Posterior cingulate gyrus (tissue), 11 donors: ENCODE measurements at regions of chr9 and their contacts with region 1.

Region 1: GRCh38 chr9:136400038-136400834 is at the start of gene SNAPC4:
- DNase-seq: peak; percentile 66 to 98 (median 80)

Region 2: DNA sequence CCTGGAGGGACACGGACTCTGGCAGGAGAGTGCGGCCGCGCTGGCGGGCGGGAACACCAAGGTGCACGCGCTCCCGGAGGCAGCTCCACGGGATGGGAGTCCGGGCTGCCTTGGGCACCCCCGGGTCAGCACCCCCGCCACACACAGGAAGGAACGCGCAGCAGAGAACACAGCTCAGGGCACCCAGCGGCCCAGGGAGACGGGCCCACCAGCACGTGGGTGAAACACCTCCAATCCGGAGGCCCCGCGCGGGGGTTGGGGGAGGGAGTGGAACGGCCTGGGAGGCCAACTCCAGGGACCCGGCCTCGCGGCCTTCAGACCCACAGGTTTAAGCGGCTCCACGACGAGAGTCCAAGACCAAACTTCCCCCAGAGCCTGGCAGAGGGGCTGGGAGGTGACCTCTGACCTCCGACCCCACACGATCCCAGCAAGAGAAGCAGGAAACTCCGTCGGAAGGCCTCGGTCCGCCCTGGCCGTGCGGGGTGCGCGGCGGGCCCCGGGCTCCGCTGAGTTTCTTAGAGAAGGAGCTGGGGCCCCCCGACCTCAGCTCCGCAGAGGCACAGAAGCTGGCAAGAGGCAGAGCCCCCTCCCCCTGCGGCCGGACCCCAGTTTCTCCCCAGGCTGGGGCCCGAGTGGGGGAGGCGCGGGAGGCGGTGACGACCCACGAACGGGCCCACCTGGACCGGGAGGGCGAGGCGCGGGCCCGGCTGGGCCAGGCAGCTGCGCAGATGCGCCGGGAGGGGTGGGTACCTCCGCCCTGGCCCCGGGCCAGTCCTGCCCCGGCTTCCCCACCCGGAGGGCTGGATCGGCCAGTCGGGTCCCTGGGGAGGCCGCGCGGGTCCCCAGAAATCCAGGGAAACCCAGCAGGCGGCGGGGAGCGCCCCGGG is 306.0 kb before region 1 on chr9:
- intact Hi-C with region 1: no loop called
- DNase-seq: no peak

Region 3: GRCh38 chr9:136312436-136312835 is 87.8 kb before region 1 on chr9:
- intact Hi-C with region 1: loop called (anchors 2 kb)
- DNase-seq: peak in 8 of 10 donors; percentile 42 to 94 (median 68)

Region 4: GRCh38 chr9:136363606-136364370 is 36.4 kb before region 1 on chr9 and contains the start of gene DNLZ:
- intact Hi-C with region 1: loop called (anchors 2 kb)
- DNase-seq: peak in 9 of 10 donors; percentile 59 to 97 (median 76)

Region 5: DNA sequence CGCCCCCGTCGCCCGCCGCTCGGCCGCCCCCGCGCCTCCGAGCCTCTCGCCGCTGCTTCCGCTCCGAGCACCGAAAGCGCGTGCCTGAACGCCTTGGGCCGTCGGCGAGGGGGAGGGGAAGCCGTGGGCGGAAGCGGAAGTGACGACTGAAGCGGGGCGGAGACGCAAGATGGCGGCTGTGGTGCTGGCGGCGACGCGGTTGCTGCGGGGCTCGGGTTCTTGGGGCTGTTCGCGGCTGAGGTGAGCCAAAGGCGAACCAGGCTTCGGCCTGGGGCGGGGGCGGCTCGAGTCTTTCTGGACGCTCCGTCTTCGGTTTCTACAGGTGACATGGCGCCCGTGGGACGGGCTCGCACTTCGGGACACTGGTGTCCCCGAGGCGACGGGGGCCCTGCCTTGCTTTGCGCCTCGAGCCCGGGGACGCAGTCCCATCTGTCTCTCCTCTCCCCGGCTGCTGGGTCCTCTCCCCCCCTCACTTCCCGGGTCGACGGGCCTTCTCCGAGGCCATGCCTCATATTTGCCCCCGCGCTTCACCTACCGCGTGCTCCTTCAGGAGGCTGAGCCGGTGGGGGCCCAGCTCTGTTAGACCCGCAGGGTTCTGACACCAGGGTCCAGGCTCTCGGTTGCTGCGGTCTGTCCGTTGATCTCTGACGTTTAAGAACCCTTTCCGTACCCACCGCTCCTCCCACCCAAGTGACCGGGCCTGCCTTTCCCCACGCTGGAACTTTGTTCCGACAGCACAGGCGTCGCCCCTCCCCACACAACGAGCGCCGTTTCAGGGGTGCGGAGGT is 10.5 kb after region 1 on chr9 and contains the starts of genes ENTR1 and PMPCA:
- intact Hi-C with region 1: loop called (anchors 1 kb)
- DNase-seq: peak; percentile 85 to 99 (median 94)

Region 6: GRCh38 chr9:136439550-136440408 is 39.5 kb after region 1 on chr9 and contains the start of gene INPP5E:
- intact Hi-C with region 1: loop called (anchors 1 kb)
- DNase-seq: peak; percentile 48 to 95 (median 72)